Uterus (tissue), 4 donors: ENCODE measurements at regions of chr16 and their contacts with region 1.

Region 1: DNA sequence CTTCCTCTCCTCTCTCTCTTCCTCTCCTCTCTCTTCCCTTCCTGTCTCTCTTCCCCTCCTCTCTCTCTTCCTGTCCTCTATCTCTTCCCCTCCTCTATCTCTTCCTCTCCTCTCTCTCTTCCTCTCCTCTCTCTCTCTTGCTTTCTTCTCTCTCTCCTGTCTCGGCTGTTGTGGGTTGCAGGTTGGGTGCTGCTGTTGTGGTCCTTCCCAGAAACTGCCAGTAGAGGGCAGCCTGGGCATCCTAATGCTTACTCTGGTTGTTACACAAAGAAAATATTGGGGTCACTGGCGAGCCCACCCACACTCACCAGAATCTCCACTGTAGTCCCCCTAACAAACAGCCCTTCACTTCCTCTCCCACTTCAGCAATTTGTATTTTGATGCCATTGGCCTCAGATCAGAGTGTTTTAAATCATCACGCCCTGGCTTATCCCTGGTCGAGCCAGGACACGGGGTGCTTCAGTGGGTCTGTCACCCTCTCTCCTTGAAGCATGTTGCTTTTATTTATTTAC is 4.9 kb upstream of the MMP15 start:
- DNase-seq: peak; percentile 54 to 66
- H3K4me3 ChIP-seq: no peak overlapping the region
- H3K27ac ChIP-seq: no peak overlapping the region
- H3K4me1 ChIP-seq: peaks cover 0 to 12% of the 10 kb centered on the region in 2 donors
- H3K27me3 ChIP-seq: no peaks in the 10 kb centered on the region
- CTCF ChIP-seq: peak; percentile 71 to 79 (median 74)
- POLR2A ChIP-seq: no peak

Region 2: DNA sequence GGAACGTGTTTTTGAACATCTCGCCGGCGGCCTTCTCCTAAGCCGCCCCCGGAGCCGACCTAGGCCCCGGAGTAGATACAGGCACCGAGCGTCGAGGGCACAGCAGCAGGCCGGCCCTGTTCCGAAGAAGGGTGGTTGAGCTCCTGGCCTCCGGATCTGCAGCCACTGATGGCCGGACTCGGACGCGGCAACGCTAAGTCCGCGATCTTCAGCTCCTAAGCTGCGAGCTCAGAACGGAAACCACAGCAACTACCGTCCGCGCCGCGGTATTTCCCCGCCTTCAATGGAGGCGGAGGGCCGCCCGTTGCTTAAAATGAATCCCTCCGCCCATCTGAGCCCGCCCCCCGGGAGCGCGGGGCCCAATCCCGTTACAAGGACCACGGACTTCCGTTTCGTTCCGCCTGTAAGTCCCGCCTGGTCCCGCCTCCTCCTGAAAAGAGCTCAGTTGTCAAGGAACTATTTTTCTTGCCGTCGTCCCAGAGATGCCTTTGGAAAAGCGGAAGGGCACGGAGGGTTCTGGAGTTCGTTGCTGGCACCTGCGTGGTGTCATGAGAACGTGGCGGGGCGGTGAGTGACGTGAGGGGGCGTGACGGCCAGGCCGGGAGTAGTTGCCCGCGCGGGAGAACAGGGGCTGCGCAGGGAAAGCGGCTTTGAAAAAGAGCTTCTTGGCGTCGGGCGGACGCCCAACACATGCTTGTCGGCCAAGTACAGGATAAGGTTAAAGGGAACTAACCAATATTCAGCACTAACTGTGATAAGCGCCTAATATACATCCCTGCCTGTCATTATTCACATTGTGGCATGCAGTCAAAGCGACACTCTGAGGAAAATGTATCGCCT is 108.6 kb after region 1 on chr16 and contains the start of gene CFAP20:
- intact Hi-C with region 1: loop called (anchors 5 kb)
- DNase-seq: peak; percentile 97 to 99
- H3K4me3 ChIP-seq: peak within 1 kb of the TSS; percentile 93 to 97
- H3K27ac ChIP-seq: peak within 1 kb of the TSS; percentile 83 to 87
- H3K4me1 ChIP-seq: peaks cover 11 to 12% of the 10 kb centered on the region in 2 donors
- H3K27me3 ChIP-seq: no peaks in the 10 kb centered on the region
- CTCF ChIP-seq: peak in 3 of 4 experiments; percentile 18 to 22 (median 22)
- POLR2A ChIP-seq: peak; percentile 90 to 97
- total RNA-seq, gene CFAP20: 23.7 to 88.8 (median 59.2) TPM